Calu3 (cell line): ENCODE measurements at regions of chr5 and their contacts with region 1.

Region 1: DNA sequence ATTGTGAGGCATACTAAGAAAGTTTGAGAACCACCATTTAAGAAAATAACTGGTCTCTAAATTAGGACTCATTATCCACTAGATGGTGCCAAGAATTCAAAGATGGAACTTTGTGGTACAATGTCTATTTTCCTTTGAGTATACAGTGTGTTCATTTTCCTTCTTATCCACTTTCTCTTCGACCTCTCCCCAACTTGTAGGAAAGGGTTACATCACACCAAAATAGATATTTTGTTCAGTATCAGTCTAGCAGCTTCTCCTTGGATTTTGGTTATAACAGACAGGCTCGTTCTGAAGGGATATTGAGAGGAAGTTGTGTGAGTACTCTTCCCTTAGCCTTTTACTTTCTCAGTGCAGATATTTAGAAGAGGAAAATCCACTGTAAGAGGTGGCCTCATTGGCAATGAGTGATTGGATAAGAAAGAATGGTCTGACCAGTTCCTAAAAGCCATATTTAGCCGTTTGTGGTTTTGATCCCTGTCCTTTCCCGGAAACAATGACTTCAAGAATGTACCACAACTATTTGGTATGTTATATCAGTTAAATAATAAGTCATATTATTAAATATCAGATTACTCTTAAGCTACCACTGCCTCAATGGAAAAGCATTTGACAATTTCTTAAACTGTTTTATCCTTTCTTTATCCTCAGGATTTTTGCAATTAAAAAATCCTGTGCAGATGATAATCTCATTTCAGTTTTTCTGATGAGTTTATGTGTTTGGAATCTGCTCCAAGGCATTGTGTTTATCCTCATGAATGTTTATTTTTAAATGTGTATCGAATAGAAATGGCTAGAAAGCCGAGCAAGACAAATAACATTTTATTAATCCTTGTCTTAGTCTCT is 69.0 kb upstream of the GRAMD2B start:
- DNase-seq: peak; percentile 62
- H3K4me3 Mint-ChIP-seq: peak overlapping the region; percentile 68
- H3K27ac Mint-ChIP-seq: peak overlapping the region; percentile 96
- H3K4me1 Mint-ChIP-seq: peaks cover 64% of the 10 kb centered on the region
- H3K27me3 Mint-ChIP-seq: no peaks in the 10 kb centered on the region
- CTCF ChIP-seq: peak; percentile 59

Region 2: DNA sequence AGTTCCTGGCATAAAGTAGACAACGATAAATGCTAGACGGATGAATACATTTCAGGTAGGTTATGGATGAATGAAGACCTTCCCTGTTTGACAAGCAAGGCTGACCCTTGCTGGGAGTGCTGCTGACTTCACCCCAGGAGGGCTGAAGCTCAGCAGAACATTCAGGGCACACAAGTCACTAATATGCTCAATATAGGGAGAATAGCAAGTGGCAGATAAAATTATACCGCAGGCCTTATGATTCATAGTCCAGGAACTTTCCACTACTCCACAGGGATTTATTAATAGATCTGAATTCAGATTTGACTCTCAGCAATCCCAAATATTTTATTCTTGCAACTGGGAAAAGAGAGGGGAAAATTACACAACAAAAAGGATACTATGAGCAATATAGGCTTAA is 30.8 kb after region 1 on chr5:
- CTCF ChIA-PET with region 1: no interaction called
- intact Hi-C with region 1: loop called (anchors 1 kb)
- DNase-seq: peak; percentile 43
- H3K4me3 Mint-ChIP-seq: peak overlapping the region; percentile 36
- H3K27ac Mint-ChIP-seq: peak overlapping the region; percentile 69
- H3K4me1 Mint-ChIP-seq: peaks cover 30% of the 10 kb centered on the region
- H3K27me3 Mint-ChIP-seq: no peaks in the 10 kb centered on the region
- CTCF ChIP-seq: no peak

Region 3: GRCh38 chr5:126490167-126490940 is 136.1 kb after region 1 on chr5:
- CTCF ChIA-PET with region 1: interaction called, 3 read pairs
- intact Hi-C with region 1: loop called (anchors 2 kb)
- DNase-seq: no peak
- H3K4me3 Mint-ChIP-seq: no peak overlapping the region
- H3K27ac Mint-ChIP-seq: no peak overlapping the region
- H3K4me1 Mint-ChIP-seq: no peaks in the 10 kb centered on the region
- H3K27me3 Mint-ChIP-seq: no peaks in the 10 kb centered on the region
- CTCF ChIP-seq: no peak

Region 4: GRCh38 chr5:126544087-126544740 is 190.0 kb after region 1 on chr5:
- CTCF ChIA-PET with region 1: interaction called, 17 read pairs
- intact Hi-C with region 1: loop called (anchors 1 kb)
- DNase-seq: peak; percentile 58
- H3K4me3 Mint-ChIP-seq: no peak overlapping the region
- H3K27ac Mint-ChIP-seq: no peak overlapping the region
- H3K4me1 Mint-ChIP-seq: no peaks in the 10 kb centered on the region
- H3K27me3 Mint-ChIP-seq: no peaks in the 10 kb centered on the region
- CTCF ChIP-seq: peak; percentile 71